GM12878 (cell line): ENCODE measurements at regions of chr19 and their contacts with region 1.

Region 1: GRCh38 chr19:47210689-47211316 is 20.2 kb downstream of the BBC3 start:
- DNase-seq: no peak
- ATAC-seq: peak; percentile 82
- H3K4me3 ChIP-seq: no peak overlapping the region
- H3K27ac ChIP-seq: no peak overlapping the region
- H3K4me1 ChIP-seq: 0 out of 2 replicates have a peak, but pooled peaks cover 2% of the 10 kb centered on the region
- H3K27me3 ChIP-seq: no peaks in the 10 kb centered on the region
- CTCF ChIP-seq: peak; percentile 74 to 90 (median 82); a peak in 5 of 6 replicates
- EP300 ChIP-seq: no peak
- POLR2A ChIP-seq: 0 out of 2 replicates have a peak, but pooled peaks have one; percentile 29
- RAD21 ChIP-seq: peak; percentile 80

Region 2: DNA sequence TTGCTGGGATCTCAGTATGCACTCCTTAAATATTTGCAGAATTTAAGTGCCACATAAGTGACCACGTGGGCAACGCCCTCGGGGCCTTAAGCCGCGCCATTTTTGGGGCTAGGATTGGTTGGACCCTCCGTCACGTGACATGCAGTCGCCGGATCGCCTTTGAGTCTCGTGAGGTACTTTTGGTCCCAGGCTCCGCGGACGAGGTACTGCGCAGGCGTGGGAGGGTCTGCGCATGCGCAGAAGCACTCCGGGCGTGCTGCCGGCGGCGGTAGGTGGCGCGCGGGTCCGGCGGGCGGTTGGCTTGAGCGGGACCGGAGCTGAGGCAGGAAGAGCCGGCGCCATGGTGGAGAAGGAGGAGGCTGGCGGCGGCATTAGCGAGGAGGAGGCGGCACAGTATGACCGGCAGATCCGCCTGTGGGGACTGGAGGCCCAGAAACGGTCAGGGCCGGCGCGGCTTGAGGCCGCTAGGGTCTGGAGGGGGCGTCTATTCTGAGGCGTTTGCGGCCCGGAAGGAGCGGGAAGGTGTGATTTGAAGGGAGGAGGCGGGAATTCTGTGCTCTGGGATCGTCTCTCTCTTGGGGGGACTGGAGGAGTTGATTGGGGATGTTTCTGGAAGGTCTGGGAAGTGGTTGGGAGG is 80.1 kb before region 1 on chr19 and contains the start of gene SAE1:
- CTCF ChIA-PET with region 1: interaction called, 25 read pairs
- POLR2A ChIA-PET with region 1: interaction called, 3 read pairs
- RAD21 ChIA-PET with region 1: interaction called, 6 read pairs
- SMC1A ChIA-PET with region 1: interaction called, 19 read pairs
- in situ Hi-C with region 1: no loop called
- intact Hi-C with region 1: no loop called
- DNase-seq: peak; percentile 95
- ATAC-seq: peak; percentile 92
- H3K4me3 ChIP-seq: peak within 1 kb of the TSS; percentile 94
- H3K27ac ChIP-seq: peak within 1 kb of the TSS; percentile 90
- H3K4me1 ChIP-seq: peaks cover 3% of the 10 kb centered on the region; the same call in 1 of the 2 replicates
- H3K27me3 ChIP-seq: no peaks in the 10 kb centered on the region
- CTCF ChIP-seq: peak; percentile 53 to 81 (median 56); a peak in 5 of 6 replicates
- EP300 ChIP-seq: no peak
- POLR2A ChIP-seq: peak; percentile 94
- RAD21 ChIP-seq: no peak; the same call in 1 of the 2 replicates
- polyA plus RNA-seq, gene SAE1: 62.0 to 90.0 TPM

Region 3: DNA sequence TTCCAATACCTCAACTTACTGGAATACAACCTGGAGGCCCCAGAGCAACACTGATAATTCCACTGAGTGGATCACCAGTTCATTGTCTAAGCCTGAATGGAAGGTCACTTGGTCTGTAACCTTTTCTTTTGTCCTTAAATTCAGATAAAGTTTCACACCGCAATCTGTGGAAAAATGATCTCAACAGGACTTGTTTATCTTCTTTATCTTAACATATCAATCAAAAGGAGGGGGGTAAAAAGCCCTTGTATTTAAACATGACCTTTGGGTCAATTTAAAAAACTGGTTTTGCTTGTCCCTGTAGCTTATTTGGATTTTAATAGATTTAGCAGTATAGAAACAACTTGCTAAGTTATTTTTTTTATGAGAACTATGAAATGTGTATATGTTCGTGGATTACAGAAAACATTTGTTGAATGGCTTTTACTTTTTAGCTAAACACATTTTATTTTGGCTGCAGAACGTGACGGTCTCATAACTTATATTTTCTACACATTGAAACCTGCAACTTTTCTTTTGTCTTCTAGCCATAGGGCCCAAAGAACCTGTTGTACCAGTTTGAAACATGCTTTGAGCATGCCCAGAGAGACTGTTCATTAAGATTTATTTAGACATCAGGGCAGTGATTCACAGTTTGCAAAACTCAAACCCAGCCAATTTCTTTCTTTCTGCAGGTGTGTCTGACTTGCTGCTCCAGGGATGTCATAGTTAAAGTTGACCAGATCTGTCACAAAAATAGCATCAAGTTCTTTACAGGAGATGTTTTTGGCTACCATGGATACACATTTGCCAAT is 58.4 kb before region 1 on chr19:
- CTCF ChIA-PET with region 1: interaction called, 28 read pairs
- POLR2A ChIA-PET with region 1: no interaction called
- RAD21 ChIA-PET with region 1: interaction called, 17 read pairs
- SMC1A ChIA-PET with region 1: interaction called, 37 read pairs
- in situ Hi-C with region 1: no loop called
- intact Hi-C with region 1: no loop called
- DNase-seq: no peak
- ATAC-seq: no peak
- H3K4me3 ChIP-seq: no peak overlapping the region
- H3K27ac ChIP-seq: no peak overlapping the region
- H3K4me1 ChIP-seq: peaks cover 14% of the 10 kb centered on the region
- H3K27me3 ChIP-seq: no peaks in the 10 kb centered on the region
- CTCF ChIP-seq: no peak
- EP300 ChIP-seq: no peak
- POLR2A ChIP-seq: no peak
- RAD21 ChIP-seq: no peak

Region 4: DNA sequence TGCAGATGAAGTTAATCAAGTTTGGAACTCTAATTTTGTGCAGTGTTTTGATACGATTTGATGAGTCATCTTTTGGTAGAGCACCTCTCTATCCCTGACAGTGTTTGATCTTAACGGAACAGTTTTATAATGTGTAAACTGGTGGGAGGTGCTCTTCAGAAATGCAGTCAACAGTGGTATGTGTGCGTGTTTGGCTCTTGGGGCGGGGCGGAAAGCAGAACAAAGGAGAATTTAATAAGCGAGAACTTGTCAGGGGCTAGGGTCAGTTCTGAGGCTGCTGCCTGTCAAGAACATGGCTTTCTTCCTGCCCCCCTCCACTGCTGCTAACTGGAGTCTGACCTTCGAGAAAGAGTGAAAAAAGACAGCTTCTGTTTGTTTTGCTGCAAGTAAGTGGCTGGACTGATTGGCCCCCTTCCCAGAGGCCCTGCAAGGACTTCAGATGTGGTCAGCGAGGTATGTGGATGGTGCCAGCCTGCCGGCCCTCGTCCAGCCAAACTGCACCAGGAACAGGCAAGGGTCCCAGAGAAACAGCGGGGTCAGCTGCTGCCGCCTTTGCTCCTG is 20.6 kb before region 1 on chr19:
- CTCF ChIA-PET with region 1: interaction called, 26 read pairs
- POLR2A ChIA-PET with region 1: interaction called, 7 read pairs
- RAD21 ChIA-PET with region 1: interaction called, 15 read pairs
- SMC1A ChIA-PET with region 1: interaction called, 24 read pairs
- in situ Hi-C with region 1: no loop called
- intact Hi-C with region 1: no loop called
- DNase-seq: no peak
- ATAC-seq: no peak
- H3K4me3 ChIP-seq: no peak overlapping the region
- H3K27ac ChIP-seq: no peak overlapping the region
- H3K4me1 ChIP-seq: peaks cover 19% of the 10 kb centered on the region
- H3K27me3 ChIP-seq: no peaks in the 10 kb centered on the region
- CTCF ChIP-seq: no peak
- EP300 ChIP-seq: no peak
- POLR2A ChIP-seq: no peak
- RAD21 ChIP-seq: no peak

Region 5: GRCh38 chr19:47231215-47231984 is 20.6 kb after region 1 on chr19:
- CTCF ChIA-PET with region 1: interaction called, 50 read pairs
- POLR2A ChIA-PET with region 1: interaction called, 36 read pairs
- RAD21 ChIA-PET with region 1: interaction called, 6 read pairs
- SMC1A ChIA-PET with region 1: interaction called, 46 read pairs
- in situ Hi-C with region 1: no loop called
- intact Hi-C with region 1: no loop called
- DNase-seq: peak; percentile 54
- ATAC-seq: peak; percentile 24
- H3K4me3 ChIP-seq: peak overlapping the region; percentile 62; the same call in 1 of the 2 replicates
- H3K27ac ChIP-seq: peak overlapping the region; percentile 88
- H3K4me1 ChIP-seq: peaks cover 44% of the 10 kb centered on the region
- H3K27me3 ChIP-seq: no peaks in the 10 kb centered on the region
- CTCF ChIP-seq: no peak
- EP300 ChIP-seq: 0 out of 4 replicates have a peak, but pooled peaks of 1 of the 2 experiments have one; percentile 54
- POLR2A ChIP-seq: peak; percentile 92
- RAD21 ChIP-seq: no peak

Region 6: DNA sequence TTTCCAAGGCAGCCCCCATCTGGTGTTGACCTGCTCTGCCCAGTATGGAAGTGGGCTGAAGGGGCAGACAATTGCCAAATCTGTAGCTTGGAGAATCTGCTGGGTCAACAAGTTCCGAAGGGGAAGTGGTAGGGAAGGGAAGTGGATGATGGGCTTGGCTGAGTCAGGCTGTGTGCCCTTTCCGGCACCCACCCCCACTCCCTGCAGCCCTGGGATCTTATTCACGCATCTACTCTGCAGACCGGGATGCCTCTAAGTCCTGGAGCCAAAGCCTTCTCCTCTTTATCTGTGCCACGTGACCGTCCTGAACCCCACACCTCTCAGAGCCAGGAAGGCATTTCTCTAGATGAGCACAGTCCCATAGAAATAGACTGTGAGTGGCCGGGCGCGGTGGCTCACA is 113.7 kb after region 1 on chr19:
- CTCF ChIA-PET with region 1: no interaction called
- POLR2A ChIA-PET with region 1: no interaction called
- RAD21 ChIA-PET with region 1: no interaction called
- SMC1A ChIA-PET with region 1: no interaction called
- in situ Hi-C with region 1: no loop called
- intact Hi-C with region 1: no loop called
- DNase-seq: no peak
- ATAC-seq: no peak
- H3K4me3 ChIP-seq: no peak overlapping the region
- H3K27ac ChIP-seq: no peak overlapping the region
- H3K4me1 ChIP-seq: no peaks in the 10 kb centered on the region
- H3K27me3 ChIP-seq: no peaks in the 10 kb centered on the region
- CTCF ChIP-seq: no peak
- EP300 ChIP-seq: no peak
- POLR2A ChIP-seq: no peak
- RAD21 ChIP-seq: no peak